Esophagus muscularis mucosa (tissue), 4 donors: ENCODE measurements at regions of chr6 and their contacts with region 1.

Region 1: DNA sequence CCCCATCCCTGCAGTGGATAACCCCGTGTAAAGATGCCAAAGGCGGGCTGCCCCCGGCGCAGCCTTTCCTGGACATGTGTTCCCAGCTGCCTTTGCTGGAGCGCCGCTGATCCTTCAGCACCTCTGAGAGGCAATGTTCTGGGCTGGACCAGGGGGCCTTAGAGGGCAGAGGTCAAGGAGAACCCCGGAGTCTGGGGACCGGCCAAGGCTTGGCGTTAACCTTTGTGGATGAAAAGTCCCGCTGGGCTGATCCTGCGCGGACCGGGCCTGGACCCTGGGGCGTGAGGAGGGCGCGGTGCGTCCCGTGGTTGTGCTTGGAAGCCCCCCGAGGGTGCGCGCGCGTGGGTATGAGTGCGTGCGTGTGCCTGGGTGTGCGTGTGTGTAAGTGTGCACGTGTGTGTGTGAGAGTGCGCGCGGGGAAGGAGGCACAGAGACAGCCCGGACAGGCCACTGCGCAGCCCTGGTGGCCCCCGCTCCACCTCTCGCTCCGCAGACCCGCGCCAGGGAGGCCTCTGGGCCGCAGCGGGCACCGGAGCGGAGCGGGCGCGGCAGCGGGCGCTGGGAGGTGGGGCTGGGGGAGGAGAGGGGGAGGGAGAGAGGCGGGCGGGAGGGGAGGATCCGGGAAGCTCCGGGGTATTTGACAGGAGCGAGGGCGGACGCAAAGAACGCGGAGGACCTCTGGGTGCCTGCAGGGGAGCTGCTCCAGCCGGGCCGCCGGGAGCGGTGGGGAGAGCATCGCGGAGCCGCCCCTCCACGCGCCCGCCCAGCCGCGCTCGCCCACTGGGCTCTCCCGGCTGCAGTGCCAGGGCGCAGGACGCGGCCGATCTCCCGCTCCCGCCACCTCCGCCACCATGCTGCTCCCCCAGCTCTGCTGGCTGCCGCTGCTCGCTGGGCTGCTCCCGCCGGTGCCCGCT is at the start of gene SMOC2:
- DNase-seq: no peak
- H3K4me3 ChIP-seq: peak within 1 kb of the TSS; percentile 73 to 88 (median 80)
- H3K27ac ChIP-seq: peak within 1 kb of the TSS; percentile 64 to 74 (median 72)
- H3K4me1 ChIP-seq: peaks cover 12 to 52% (median 37%) of the 10 kb centered on the region in 4 donors
- H3K27me3 ChIP-seq: peaks cover 0 to 25% (median 0%) of the 10 kb centered on the region in 4 donors
- CTCF ChIP-seq: peak in 1 of 3 experiments; percentile 8
- EP300 ChIP-seq: no peak
- POLR2A ChIP-seq: no peak
- total RNA-seq, gene SMOC2: 45.8 to 130 (median 84.0) TPM

Region 2: DNA sequence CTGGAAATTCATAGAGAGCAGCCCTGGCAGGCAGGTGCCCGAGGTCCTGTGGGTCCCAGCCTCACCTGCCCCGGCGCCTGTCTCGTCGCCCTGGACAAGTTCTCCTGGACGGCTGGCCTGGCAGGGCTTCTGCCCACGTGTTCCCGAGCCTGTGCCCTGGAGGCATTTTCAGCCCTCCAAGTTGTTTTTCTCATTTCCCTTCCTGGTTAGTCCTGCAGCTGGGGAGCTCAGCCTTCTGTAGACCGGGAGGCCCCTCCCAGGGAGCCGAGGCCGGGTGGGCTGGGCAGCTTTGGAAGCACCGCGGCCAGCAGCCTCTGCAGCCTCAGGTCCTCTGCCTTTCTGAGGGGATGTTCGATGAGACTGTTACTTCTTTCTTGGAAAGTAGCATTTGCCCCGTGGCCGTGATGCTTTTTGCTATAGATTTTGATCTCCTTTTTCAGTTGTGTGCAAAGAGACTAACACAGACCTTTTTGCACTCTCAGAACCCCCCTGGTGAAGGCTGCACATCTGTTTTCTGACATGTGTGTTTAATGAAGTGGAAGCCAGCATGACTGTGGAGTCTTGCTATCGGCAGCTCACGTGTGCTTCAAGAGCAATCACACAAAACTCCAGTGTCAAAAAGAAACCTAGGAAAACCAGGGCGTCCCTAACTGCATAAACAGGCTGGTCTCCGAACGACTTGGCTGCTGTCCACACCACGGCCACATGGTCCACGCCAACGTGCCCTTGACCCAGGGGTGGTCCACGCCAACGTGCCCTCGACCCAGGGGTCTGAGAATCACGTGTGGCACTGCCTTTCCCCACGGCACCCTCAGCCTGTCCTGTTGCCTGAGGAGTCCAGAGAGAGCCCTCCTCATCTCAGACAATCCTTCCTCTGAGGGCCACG is 207.7 kb after region 1 on chr6:
- intact Hi-C with region 1: loop called (anchors 10 kb)
- DNase-seq: no peak
- H3K4me3 ChIP-seq: peak overlapping the region in 2 of 4 donors; percentile 20 to 28
- H3K27ac ChIP-seq: no peak overlapping the region
- H3K4me1 ChIP-seq: peaks cover 0 to 13% (median 9%) of the 10 kb centered on the region in 4 donors
- H3K27me3 ChIP-seq: no peaks in the 10 kb centered on the region
- CTCF ChIP-seq: no peak
- EP300 ChIP-seq: no peak
- POLR2A ChIP-seq: no peak